Mammary epithelial cell (primary cell): ENCODE measurements at regions of chr1 and their contacts with region 1.

Region 1: DNA sequence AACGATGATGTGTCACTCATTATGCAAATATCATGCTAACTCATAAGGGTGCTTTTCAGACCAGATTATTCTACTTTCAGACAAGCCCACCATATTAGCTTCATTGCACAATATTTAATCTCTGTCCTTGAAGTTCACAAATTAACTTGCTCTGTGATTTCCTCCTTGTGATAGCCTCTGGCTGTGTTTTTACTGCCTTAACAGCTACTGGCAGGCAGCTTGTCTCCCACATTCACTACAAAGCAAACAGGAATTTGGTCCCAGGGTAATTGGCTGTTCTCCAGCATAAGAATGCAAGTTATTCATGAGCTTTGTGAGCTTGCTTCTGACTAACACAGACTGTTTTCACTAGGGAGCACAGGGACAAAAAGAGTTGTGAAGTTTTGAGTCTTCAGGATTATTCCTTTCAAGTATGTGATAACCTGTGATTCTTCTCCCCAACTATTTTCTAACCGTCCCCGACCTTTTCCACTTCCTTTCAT is 87.9 kb upstream of the HMCN1 start:
- DNase-seq: peak; percentile 99
- H3K4me3 ChIP-seq: peak overlapping the region; percentile 22 to 30 (median 25)
- H3K27ac ChIP-seq: peak overlapping the region; percentile 92
- H3K4me1 ChIP-seq: peaks cover 29% of the 10 kb centered on the region
- H3K27me3 ChIP-seq: no peaks in the 10 kb centered on the region
- CTCF ChIP-seq: no peak

Region 2: DNA sequence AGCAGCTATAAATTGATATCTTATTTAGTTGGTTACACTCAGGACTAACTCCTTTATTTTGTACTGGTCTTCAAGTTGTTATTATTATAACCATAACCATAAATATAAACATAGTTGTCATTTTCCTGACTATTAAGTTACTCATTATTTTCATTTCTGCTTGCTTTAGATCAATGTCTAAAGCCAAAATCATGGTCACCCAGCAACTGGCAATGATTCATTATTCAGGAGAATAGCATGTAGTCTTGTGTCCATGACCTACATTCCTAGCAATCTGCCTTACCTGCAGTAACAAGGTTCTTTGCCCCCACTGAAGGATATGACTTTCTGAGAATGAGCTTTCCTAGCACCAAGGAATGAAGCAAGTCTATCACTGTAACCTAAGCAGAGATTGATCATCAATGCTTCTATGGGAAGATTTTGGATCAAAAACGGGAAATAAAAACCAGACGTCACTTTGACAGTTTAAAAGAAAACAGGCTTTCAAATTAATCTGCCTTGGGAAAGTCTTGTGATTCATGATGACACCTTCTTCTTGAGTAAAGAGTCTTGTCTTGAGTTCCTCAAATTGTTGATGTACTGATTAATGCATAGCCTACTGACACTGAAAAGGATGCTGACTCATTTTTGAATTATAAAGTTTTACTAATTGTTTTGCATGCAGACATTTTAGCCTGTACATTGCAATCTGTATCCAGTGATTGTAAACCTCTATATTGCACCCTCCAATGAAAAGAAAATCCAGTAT is 125.9 kb before region 1 on chr1:
- CTCF ChIA-PET with region 1: no interaction called
- dilution Hi-C with region 1: loop called (anchors 10 kb)
- in situ Hi-C with region 1: no loop called
- intact Hi-C with region 1: loop called (anchors 5 kb)
- DNase-seq: peak; percentile 87
- H3K4me3 ChIP-seq: peak overlapping the region in 1 of 3 experiments; percentile 12
- H3K27ac ChIP-seq: peak overlapping the region; percentile 93
- H3K4me1 ChIP-seq: peaks cover 15% of the 10 kb centered on the region
- H3K27me3 ChIP-seq: no peaks in the 10 kb centered on the region
- CTCF ChIP-seq: no peak

Region 3: GRCh38 chr1:185559684-185560331 is 86.4 kb before region 1 on chr1:
- CTCF ChIA-PET with region 1: interaction called, 4 read pairs
- dilution Hi-C with region 1: loop called (anchors 10 kb)
- in situ Hi-C with region 1: no loop called
- intact Hi-C with region 1: loop called (anchors 2 kb)
- DNase-seq: peak; percentile 65
- H3K4me3 ChIP-seq: no peak overlapping the region
- H3K27ac ChIP-seq: no peak overlapping the region
- H3K4me1 ChIP-seq: peaks cover 17% of the 10 kb centered on the region
- H3K27me3 ChIP-seq: no peaks in the 10 kb centered on the region
- CTCF ChIP-seq: peak; percentile 60 to 74

Region 4: GRCh38 chr1:185566995-185567394 is 79.2 kb before region 1 on chr1:
- CTCF ChIA-PET with region 1: interaction called, 4 read pairs
- dilution Hi-C with region 1: loop called (anchors 10 kb)
- in situ Hi-C with region 1: no loop called
- intact Hi-C with region 1: loop called (anchors 2 kb)
- DNase-seq: peak; percentile 92
- H3K4me3 ChIP-seq: no peak overlapping the region
- H3K27ac ChIP-seq: peak overlapping the region; percentile 91
- H3K4me1 ChIP-seq: peaks cover 64% of the 10 kb centered on the region
- H3K27me3 ChIP-seq: no peaks in the 10 kb centered on the region
- CTCF ChIP-seq: no peak

Region 5: DNA sequence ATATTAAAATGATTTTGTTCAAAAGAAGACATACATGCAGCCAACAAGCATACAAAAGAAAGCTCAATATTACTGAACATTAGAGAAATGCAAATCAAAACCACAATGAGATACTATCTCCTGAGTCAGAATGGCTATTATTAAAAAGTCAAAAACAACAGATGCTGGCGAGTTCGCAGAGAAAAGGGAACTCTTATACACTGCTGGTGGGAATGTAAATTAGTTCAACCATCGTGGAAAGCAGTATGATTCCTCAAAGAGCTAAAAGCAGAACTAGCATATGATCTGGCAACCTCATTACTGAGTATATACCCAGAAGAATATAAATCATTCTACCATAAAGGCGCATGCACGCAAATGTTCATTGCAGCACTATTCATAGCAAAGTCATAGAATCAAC is 38.1 kb before region 1 on chr1:
- CTCF ChIA-PET with region 1: interaction called, 12 read pairs
- dilution Hi-C with region 1: no loop called
- in situ Hi-C with region 1: no loop called
- intact Hi-C with region 1: no loop called
- DNase-seq: peak; percentile 21
- H3K4me3 ChIP-seq: no peak overlapping the region
- H3K27ac ChIP-seq: no peak overlapping the region
- H3K4me1 ChIP-seq: no peaks in the 10 kb centered on the region
- H3K27me3 ChIP-seq: no peaks in the 10 kb centered on the region
- CTCF ChIP-seq: no peak